HepG2 (cell line): ENCODE measurements at regions of chr21 and their contacts with region 1.

Region 1: DNA sequence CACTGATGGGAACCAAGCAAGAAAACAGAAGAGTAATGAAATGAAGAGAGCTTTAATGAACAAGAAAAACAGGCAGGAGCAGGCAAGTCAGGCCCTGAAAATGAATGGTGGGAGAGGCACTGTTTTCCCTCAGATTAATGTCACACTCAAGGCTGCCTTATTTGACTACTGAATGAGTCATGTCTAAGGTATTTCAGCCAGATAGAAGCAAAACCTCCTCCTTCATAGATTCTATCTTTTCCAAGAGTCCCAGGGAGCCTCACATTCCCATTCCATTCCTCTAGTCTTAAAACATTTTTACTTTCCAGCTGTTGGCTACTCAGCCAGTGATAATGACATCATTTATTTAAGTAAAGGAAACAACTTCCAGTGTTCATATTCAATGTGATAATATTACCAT is 228.4 kb upstream of the NRIP1 start:
- DNase-seq: peak; percentile 30
- ATAC-seq: no peak
- H3K4me3 ChIP-seq: no peak overlapping the region
- H3K27ac ChIP-seq: no peak overlapping the region
- H3K4me1 ChIP-seq: peaks cover 37% of the 10 kb centered on the region
- H3K27me3 ChIP-seq: no peaks in the 10 kb centered on the region
- CTCF ChIP-seq: no peak
- EP300 ChIP-seq: no peak
- POLR2A ChIP-seq: no peak
- RAD21 ChIP-seq: no peak

Region 2: DNA sequence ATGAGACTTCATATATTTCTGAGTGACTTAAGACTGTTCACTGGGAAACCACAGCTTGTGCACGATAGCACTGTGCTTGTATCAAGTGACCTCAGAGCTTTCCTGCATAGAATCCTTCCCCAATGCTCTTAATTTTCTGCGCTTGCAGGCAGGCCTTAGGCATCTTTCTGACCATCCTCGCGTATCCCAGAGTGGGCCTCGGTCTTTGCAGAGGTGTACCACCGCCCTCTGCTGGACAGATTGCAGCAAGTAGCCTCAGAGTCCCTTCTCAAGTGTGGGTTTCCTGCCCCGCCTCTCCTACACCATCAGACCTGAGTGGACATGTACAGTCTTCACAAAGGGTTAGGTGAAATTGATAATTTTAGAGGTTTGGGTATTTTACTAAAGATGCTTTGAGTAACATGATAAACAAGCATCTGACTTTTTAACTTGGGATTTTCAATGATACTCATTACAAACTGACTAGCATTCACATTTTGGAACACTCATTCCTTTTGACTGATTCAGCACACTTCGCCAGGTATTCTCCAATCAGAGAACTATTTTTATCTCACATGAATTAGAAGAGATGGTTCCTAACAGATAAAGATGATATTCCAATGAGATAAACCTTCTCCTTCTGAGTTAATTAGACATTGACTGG is 190.0 kb after region 1 on chr21:
- CTCF ChIA-PET with region 1: no interaction called
- POLR2A ChIA-PET with region 1: no interaction called
- in situ Hi-C with region 1: no loop called
- intact Hi-C with region 1: loop called (anchors 10 kb)
- DNase-seq: peak; percentile 82
- ATAC-seq: peak; percentile 100
- H3K4me3 ChIP-seq: no peak overlapping the region
- H3K27ac ChIP-seq: no peak overlapping the region
- H3K4me1 ChIP-seq: peaks cover 25% of the 10 kb centered on the region
- H3K27me3 ChIP-seq: no peaks in the 10 kb centered on the region
- CTCF ChIP-seq: peak; percentile 97
- EP300 ChIP-seq: no peak
- POLR2A ChIP-seq: no peak
- RAD21 ChIP-seq: peak; percentile 96